ENCODE measurements at regions of chr17 and their contacts with region 1.

Region 1: DNA sequence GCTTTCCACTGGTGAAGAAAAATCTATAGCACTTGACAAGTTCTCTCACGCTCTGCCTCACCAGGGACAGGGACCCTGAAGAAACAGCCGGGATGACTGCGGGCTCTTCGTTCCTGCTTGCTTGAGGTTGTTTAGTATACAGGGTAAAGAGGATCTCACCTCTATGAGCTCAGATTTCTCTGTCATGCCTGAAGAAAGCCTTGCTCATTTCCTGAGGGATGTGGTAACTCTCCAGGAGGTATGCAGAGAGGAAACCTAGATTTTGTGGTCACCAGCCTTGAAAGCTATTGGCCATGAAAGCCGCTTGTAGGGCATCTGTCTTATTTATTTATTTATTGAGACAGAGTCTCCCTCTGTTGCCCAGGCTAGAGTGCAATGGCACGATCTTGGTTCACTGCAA is 23.2 kb downstream of the USP43 start:
- DNase-seq: no peak

Region 2: DNA sequence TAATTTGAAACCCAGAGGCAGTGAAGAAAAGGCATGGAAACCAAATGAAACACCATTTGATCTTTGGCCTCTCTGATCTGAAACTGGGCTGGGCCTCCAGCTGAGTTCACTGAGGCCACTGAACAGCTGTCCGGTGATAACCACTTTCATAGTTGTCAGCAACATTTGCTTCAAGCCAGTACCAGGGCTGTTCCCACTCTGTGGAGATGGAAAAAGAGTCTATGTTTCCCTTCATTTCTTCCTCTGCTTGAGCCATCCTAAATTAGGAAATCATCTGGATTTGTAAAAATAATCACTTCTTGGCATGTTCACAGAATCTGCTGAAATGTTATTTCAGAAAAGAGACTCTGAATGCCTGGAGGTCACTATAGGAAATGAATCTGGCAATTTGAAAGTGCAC is 212.2 kb before region 1 on chr17:
- in situ Hi-C with region 1: no loop called
- DNase-seq: no peak

Region 3: DNA sequence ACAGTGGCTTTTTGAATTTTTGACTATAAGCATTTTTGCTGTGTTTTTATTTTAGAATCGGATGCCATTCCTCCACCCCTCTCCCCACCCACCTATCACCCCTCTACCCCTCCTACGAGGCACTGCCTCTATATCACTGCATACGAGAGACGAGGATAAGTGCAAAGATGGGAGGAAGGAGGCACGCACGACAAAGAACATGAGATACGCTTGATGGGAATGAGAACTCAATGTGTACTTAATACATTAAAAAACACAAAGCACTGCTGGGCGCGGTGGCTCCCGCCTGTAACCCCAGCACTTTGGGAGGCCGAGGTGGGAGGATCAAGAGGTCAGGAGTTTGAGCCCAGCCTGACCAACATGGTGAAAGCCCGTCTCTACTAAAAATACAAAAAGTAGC is 32.0 kb before region 1 on chr17:
- in situ Hi-C with region 1: no loop called
- DNase-seq: no peak

Region 4: GRCh38 chr17:9729034-9729650 is 60.6 kb after region 1 on chr17:
- in situ Hi-C with region 1: loop called (anchors 5 kb)
- DNase-seq: peak; percentile 74

Region 5: GRCh38 chr17:9743096-9743495 is 74.6 kb after region 1 on chr17:
- in situ Hi-C with region 1: no loop called
- DNase-seq: no peak

Region 6: GRCh38 chr17:10105513-10106001 is 437.0 kb after region 1 on chr17:
- in situ Hi-C with region 1: no loop called
- DNase-seq: no peak

Measured in G401 (cell line).